Dorsolateral prefrontal cortex (tissue), 120 donors: ENCODE measurements at regions of chr3 and their contacts with region 1.

Region 1: GRCh38 chr3:128497387-128498126 is 4.6 kb upstream of the GATA2 start:
- DNase-seq: peak; percentile 66 to 85 (median 74)
- H3K4me3 ChIP-seq: peak overlapping the region; percentile 38 to 79 (median 62)
- H3K27ac ChIP-seq: peak overlapping the region in 1 of 59 donors; percentile 39
- H3K27me3 ChIP-seq: peaks cover 2 to 86% (median 60%) of the 10 kb centered on the region in 45 donors
- CTCF ChIP-seq: peak; percentile 22 to 97 (median 74)

Region 2: GRCh38 chr3:127775398-127776109 is 722.0 kb before region 1 on chr3:
- intact Hi-C with region 1: no loop called
- DNase-seq: no peak
- H3K4me3 ChIP-seq: peak overlapping the region in 3 of 59 donors; percentile 0 to 6 (median 4)
- H3K27ac ChIP-seq: peak overlapping the region in 55 of 59 donors; percentile 2 to 86 (median 67)
- H3K27me3 ChIP-seq: no peaks in the 10 kb centered on the region
- CTCF ChIP-seq: no peak

Region 3: DNA sequence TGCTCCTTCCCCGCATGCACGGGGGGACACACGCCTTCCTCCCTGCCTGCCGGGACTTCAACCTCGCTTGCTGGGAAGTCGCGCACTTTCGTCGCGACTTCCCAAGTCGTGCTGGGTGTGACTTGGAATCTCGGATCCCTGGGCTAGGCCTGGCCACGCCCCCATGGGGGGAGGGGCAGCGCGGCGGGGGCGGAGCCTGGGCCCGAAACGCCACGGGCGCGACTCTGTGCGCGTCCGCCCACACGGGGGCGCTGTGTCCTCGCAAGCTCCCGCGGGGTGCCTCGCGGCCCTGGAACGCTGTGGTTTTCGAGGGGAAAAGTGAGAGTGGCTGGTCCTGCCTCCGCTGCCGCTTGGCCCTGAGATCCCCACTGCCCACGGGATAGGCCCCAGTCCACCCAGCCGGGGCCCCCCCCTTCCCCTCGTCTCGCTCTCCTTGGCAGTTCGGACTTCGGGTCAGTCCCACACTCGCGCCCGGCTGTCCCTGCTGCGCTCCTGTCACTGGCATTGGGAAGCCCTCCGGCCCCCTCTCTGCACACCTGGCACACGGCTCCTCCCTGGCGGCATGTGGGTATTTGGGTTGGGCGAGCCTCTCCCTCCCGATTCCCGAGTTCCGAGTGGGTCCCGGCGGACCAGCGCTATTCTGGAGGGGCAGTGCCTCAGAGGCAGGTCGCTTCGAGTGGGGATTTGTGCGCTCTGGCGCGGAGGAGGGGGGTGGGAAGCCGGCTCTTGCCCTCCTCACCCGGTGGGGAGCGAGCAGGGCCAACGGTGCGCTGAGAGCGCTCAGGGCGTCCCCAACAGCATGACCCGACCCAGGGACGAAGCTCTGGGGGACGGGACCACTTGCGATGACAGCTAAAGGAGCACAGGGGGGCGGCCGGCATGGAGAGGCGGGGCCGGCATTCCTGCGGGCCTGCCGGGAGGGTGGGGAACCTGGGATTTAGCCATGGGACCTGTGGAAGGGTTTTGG is 421.8 kb before region 1 on chr3:
- intact Hi-C with region 1: loop called in 1 of 2 experiments (anchors 10 kb)
- DNase-seq: peak; percentile 84 to 94 (median 90)
- H3K4me3 ChIP-seq: peak overlapping the region; percentile 45 to 79 (median 68)
- H3K27ac ChIP-seq: peak overlapping the region in 55 of 59 donors; percentile 4 to 89 (median 76)
- H3K27me3 ChIP-seq: no peaks in the 10 kb centered on the region
- CTCF ChIP-seq: peak; percentile 74 to 98 (median 94)

Region 4: DNA sequence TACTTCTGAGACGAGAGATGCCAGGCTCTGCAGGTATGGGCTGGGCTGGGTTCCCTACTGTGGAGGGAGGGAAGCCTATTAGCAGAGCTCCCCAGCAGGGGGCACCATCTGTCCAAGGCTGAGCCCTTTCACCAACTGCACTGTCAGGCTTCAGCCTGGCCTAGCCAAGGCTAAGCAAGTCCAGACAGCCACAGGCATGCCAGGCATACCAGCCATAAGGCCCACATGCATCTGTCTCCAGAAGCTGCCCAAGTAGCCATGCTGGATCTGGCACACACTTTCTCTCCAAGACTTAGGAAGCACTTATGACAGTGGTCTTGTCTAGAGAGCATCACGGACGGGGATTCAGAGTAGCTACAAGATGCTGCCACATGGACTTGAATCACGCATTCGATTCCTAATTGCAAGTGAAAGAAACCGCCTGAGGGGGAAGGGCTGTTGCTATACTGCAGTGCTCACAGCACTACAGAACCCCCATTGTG is 402.3 kb before region 1 on chr3:
- intact Hi-C with region 1: loop called in 1 of 2 experiments (anchors 2 kb)
- DNase-seq: peak; percentile 78 to 89 (median 87)
- H3K4me3 ChIP-seq: no peak overlapping the region
- H3K27ac ChIP-seq: peak overlapping the region in 29 of 59 donors; percentile 2 to 72 (median 43)
- H3K27me3 ChIP-seq: no peaks in the 10 kb centered on the region
- CTCF ChIP-seq: peak; percentile 60 to 93 (median 86)

Region 5: GRCh38 chr3:128426128-128426921 is 71.2 kb before region 1 on chr3:
- intact Hi-C with region 1: loop called (anchors 1 to 5 kb)
- DNase-seq: peak in 4 of 10 donors; percentile 22 to 73 (median 40)
- H3K4me3 ChIP-seq: peak overlapping the region in 55 of 59 donors; percentile 5 to 63 (median 41)
- H3K27ac ChIP-seq: peak overlapping the region in 1 of 59 donors; percentile 2
- H3K27me3 ChIP-seq: peaks cover 0 to 21% (median 3%) of the 10 kb centered on the region in 45 donors
- CTCF ChIP-seq: peak; percentile 21 to 96 (median 76)

Region 6: DNA sequence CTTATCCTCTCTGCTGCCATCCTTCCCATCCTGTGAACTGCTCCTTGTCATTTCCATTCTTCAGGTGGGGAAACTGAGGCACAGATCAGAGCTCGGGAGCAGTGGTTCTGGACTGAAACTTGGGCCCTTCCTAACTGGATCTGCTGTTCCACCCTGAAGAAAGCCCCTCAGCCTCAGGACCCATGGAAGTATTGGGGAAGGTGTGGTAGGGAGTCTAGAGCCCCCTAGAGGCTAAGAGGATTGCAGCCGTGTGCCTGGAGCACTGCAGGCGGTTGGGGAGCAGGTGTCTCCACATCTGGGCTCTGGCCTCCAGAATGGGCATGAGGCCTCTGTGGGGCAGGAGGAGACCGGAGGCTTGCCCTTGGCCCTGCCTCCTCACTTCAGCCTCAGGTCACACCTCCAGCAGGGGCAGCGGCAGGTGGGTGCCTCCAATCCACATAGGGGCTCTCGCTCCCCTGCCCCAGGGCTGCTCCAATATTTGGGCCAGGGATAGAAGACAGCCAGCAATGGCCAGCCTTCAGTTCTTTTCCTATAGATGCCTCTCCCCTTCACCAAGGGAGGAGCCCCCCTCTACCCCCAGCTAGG is 59.0 kb before region 1 on chr3:
- intact Hi-C with region 1: no loop called
- DNase-seq: no peak
- H3K4me3 ChIP-seq: no peak overlapping the region
- H3K27ac ChIP-seq: no peak overlapping the region
- H3K27me3 ChIP-seq: peaks cover 0 to 15% (median under 1%) of the 10 kb centered on the region in 45 donors
- CTCF ChIP-seq: peak in 1 of 56 donors; percentile 17

Region 7: GRCh38 chr3:128559486-128560225 is 62.1 kb after region 1 on chr3:
- intact Hi-C with region 1: no loop called
- DNase-seq: no peak
- H3K4me3 ChIP-seq: no peak overlapping the region
- H3K27ac ChIP-seq: no peak overlapping the region
- H3K27me3 ChIP-seq: peaks cover 0 to 46% (median 28%) of the 10 kb centered on the region in 45 donors
- CTCF ChIP-seq: no peak

Region 8: DNA sequence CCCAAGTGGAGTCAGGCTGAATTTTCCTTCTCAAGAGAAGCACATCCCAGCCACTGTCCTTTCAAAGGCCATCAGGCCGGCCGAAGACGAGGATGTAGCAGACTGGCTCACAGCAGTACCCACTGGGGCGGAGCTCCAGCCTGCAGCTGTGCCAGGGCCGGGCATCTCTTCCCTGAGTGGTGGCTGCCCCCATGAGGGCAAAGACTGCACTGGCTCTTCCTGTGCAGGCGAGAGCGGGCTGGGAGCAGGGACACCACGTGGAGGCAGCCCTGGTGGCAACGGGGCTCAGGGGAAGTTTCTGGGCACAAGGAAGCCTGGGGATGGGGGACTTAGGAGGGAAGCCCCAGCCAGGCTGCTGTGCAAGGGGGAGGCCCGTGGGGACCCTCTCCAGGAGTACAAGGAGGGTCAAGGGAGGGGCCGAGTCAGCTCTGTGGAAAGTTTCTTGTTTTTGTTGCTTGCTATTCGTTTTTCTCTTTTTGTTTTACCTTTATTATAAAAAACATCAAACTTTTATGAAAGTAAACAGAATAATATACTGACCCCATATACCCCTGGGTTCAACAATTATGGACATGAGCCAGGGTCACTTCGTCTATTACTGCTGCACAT is 87.0 kb after region 1 on chr3:
- intact Hi-C with region 1: loop called in 1 of 2 experiments (anchors 2 kb)
- DNase-seq: peak; percentile 63 to 82 (median 79)
- H3K4me3 ChIP-seq: peak overlapping the region in 1 of 59 donors; percentile 12
- H3K27ac ChIP-seq: peak overlapping the region in 1 of 59 donors; percentile 16
- H3K27me3 ChIP-seq: no peaks in the 10 kb centered on the region
- CTCF ChIP-seq: peak; percentile 37 to 95 (median 81)